ENCODE measurements at regions of chrX and their contacts with region 1.

Region 1: GRCh38 chrX:106481341-106481740 is 130.4 kb upstream of the RADX start:
- DNase-seq: no peak
- H3K4me3 Mint-ChIP-seq: no peak overlapping the region
- H3K27ac Mint-ChIP-seq: no peak overlapping the region
- H3K4me1 Mint-ChIP-seq: peaks cover 27% of the 10 kb centered on the region
- H3K27me3 Mint-ChIP-seq: no peaks in the 10 kb centered on the region

Region 2: DNA sequence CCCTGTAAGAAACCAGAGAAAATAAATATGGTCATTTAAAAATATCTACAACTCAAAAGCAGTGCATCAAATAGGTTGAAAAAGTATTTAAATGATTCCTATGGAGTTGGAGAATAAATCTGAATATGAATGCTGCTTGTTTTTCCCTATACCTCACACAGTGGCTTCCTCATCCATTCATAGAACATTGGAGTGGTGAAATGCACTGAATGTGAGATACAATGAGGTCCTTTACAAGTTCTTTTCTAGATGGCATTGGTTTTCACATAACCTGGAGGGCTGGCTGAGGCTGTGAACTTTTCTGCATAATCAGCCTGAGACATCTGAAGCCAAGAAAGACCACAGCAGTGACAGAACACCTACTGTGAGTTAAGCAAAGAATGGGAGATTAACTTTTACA is 938.1 kb before region 1 on chrX:
- CTCF ChIA-PET with region 1: no interaction called
- POLR2A ChIA-PET with region 1: no interaction called
- intact Hi-C with region 1: no loop called
- DNase-seq: no peak
- H3K4me3 Mint-ChIP-seq: no peak overlapping the region
- H3K27ac Mint-ChIP-seq: no peak overlapping the region
- H3K4me1 Mint-ChIP-seq: no peaks in the 10 kb centered on the region
- H3K27me3 Mint-ChIP-seq: no peaks in the 10 kb centered on the region

Region 3: GRCh38 chrX:106588801-106589200 is 107.5 kb after region 1 on chrX:
- CTCF ChIA-PET with region 1: no interaction called
- POLR2A ChIA-PET with region 1: no interaction called
- intact Hi-C with region 1: loop called (anchors 1 kb)
- DNase-seq: no peak
- H3K4me3 Mint-ChIP-seq: no peak overlapping the region
- H3K27ac Mint-ChIP-seq: no peak overlapping the region
- H3K4me1 Mint-ChIP-seq: peaks cover 4% of the 10 kb centered on the region
- H3K27me3 Mint-ChIP-seq: no peaks in the 10 kb centered on the region

Region 4: GRCh38 chrX:106619797-106620196 is 138.5 kb after region 1 on chrX:
- CTCF ChIA-PET with region 1: interaction called, 40 read pairs
- POLR2A ChIA-PET with region 1: no interaction called
- intact Hi-C with region 1: no loop called
- DNase-seq: no peak
- H3K4me3 Mint-ChIP-seq: no peak overlapping the region
- H3K27ac Mint-ChIP-seq: no peak overlapping the region
- H3K4me1 Mint-ChIP-seq: peaks cover 9% of the 10 kb centered on the region
- H3K27me3 Mint-ChIP-seq: no peaks in the 10 kb centered on the region

Region 5: GRCh38 chrX:106791495-106791894 is 310.2 kb after region 1 on chrX:
- CTCF ChIA-PET with region 1: interaction called, 13 read pairs
- POLR2A ChIA-PET with region 1: no interaction called
- intact Hi-C with region 1: loop called (anchors 1 kb)
- DNase-seq: no peak
- H3K4me3 Mint-ChIP-seq: no peak overlapping the region
- H3K27ac Mint-ChIP-seq: no peak overlapping the region
- H3K4me1 Mint-ChIP-seq: no peaks in the 10 kb centered on the region
- H3K27me3 Mint-ChIP-seq: no peaks in the 10 kb centered on the region